ENCODE measurements at regions of chr3 and their contacts with region 1.

Region 1: GRCh38 chr3:190696777-190697501 is 165.6 kb downstream of the GMNC start:
- DNase-seq: no peak
- ATAC-seq: peak; percentile 28

Region 2: GRCh38 chr3:190384241-190384863 is 312.6 kb before region 1 on chr3:
- intact Hi-C with region 1: loop called (anchors 10 kb)
- DNase-seq: no peak
- ATAC-seq: peak; percentile 96

Region 3: DNA sequence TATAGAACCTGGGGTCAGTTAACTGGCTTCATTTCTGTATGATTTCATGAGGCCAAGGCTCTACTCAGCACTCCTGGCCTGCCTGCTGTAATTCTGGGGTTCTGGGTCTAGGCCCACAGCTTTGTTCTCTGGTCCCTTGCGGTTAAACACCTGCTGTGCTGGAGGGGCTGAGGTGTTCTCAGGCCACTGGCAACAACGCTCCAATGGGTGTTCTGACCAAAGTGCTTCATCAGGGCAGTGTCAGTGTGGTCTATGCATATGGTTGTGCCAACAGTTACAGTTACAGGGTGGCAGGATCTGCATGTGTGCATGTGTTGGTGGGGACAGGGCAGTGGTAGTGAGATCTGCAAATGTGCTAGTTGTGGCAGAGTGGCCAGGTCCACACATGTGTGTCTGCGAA is 229.7 kb after region 1 on chr3:
- intact Hi-C with region 1: no loop called
- DNase-seq: no peak
- ATAC-seq: no peak

Measured in Right ventricle myocardium superior (tissue), 1 donor.